CD4-positive, alpha-beta memory T cell (primary cell): ENCODE measurements at regions of chr18 and their contacts with region 1.

Region 1: DNA sequence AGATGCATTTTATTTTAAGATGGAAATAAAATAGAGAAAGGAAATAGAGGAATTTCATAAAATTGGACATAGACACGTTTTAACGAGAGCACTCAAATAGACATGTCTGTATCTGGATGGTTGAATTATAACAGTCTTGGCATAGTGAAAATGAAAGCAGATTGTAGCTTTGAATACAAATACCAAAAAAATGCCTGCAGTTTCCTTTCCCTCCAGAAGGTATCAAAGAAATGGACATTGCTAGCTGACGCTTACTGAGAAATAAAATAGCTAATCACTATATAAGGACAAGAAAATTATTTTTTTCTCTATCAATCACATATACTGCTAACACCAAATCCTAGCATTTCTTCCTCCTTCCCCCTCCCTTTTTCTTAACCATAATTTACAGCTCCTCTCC is 11.4 kb upstream of the MAPRE2 start:
- DNase-seq: peak in 4 of 5 donors; percentile 47 to 62 (median 56)
- H3K4me3 ChIP-seq: peak overlapping the region; percentile 25 to 60
- H3K4me3 Mint-ChIP-seq: peak overlapping the region; percentile 81 to 94 (median 88)
- H3K27ac ChIP-seq: peak overlapping the region; percentile 80
- H3K27ac Mint-ChIP-seq: peak overlapping the region; percentile 84 to 99 (median 98)
- H3K4me1 ChIP-seq: peaks cover 36% of the 10 kb centered on the region
- H3K4me1 Mint-ChIP-seq: peaks cover 34 to 45% (median 40%) of the 10 kb centered on the region in 4 donors
- H3K27me3 ChIP-seq: no peaks in the 10 kb centered on the region
- H3K27me3 Mint-ChIP-seq: no peaks in the 10 kb centered on the region

Region 2: DNA sequence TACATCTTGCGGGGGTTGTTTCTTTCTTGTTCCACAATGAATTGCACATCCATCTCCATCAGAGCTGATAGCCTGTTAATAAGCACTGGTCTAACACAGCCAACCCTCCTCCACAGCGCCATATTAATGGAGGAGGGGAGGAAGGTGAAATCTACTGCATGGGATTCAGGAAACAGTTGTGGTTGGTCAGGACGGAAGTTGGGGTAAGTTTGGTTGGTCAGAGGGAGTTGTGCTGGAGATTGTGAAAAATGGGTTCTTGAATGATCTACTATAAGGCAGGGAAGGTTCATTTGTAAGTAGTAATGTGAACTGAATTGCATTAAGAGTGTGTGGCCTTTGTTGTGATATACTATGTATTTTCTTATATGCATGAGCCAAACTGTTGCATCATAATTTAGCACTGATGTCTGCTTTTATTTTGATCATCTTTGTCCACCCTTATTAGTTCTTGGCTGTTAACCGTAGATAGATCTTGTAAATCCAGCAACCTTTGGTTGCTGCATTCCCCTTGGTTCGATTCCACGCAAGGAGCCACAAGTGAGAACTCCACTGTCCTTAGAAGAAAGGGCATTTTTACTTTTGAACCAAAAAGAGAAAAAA is 139.2 kb before region 1 on chr18:
- CTCF ChIA-PET with region 1: no interaction called
- POLR2A ChIA-PET with region 1: no interaction called
- intact Hi-C with region 1: no loop called
- DNase-seq: no peak
- H3K4me3 ChIP-seq: no peak overlapping the region
- H3K4me3 Mint-ChIP-seq: no peak overlapping the region
- H3K27ac ChIP-seq: no peak overlapping the region
- H3K27ac Mint-ChIP-seq: no peak overlapping the region
- H3K4me1 ChIP-seq: no peaks in the 10 kb centered on the region
- H3K4me1 Mint-ChIP-seq: no peaks in the 10 kb centered on the region
- H3K27me3 ChIP-seq: no peaks in the 10 kb centered on the region
- H3K27me3 Mint-ChIP-seq: peaks cover 13 to 33% of the 10 kb centered on the region in 2 donors

Region 3: GRCh38 chr18:34976899-34977837 is 52.6 kb before region 1 on chr18:
- CTCF ChIA-PET with region 1: interaction called, 3 read pairs
- POLR2A ChIA-PET with region 1: interaction called, 10 read pairs
- intact Hi-C with region 1: no loop called
- DNase-seq: peak; percentile 58 to 81 (median 66)
- H3K4me3 ChIP-seq: peak overlapping the region; percentile 60 to 82
- H3K4me3 Mint-ChIP-seq: peak overlapping the region; percentile 90 to 97 (median 94)
- H3K27ac ChIP-seq: no peak overlapping the region
- H3K27ac Mint-ChIP-seq: peak overlapping the region in 4 of 7 donors; percentile 83 to 90 (median 88)
- H3K4me1 ChIP-seq: peaks cover 14% of the 10 kb centered on the region
- H3K4me1 Mint-ChIP-seq: peaks cover 15 to 30% (median 19%) of the 10 kb centered on the region in 4 donors
- H3K27me3 ChIP-seq: peaks cover 9% of the 10 kb centered on the region
- H3K27me3 Mint-ChIP-seq: peaks cover 10 to 12% of the 10 kb centered on the region in 2 donors

Region 4: DNA sequence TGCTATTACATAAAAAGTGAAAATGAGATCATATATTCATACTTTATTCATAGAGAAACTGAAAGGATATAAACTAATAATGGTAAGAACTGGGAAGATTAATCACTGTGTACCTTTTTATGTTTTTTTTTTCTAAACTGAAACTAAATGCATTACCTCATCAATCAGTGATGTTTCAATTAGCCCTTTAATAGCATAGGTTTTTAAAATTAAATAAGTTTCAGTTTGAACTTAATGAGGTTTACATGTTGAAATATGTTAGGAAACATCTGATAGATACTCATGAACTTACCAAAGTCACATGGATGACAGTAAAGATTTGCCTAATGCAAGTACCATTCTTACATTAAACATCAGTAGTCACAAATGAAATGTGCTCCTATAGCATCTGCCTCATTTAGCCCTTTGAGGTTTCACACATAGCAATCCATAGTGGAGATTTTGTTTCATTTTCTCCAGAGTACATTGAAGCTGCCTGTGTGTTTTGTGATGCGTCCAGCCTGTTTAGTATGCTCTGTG is 20.3 kb after region 1 on chr18:
- CTCF ChIA-PET with region 1: interaction called, 48 read pairs
- POLR2A ChIA-PET with region 1: interaction called, 15 read pairs
- intact Hi-C with region 1: no loop called
- DNase-seq: no peak
- H3K4me3 ChIP-seq: peak overlapping the region in 1 of 2 donors; percentile 31
- H3K4me3 Mint-ChIP-seq: peak overlapping the region in 6 of 8 donors; percentile 32 to 80 (median 68)
- H3K27ac ChIP-seq: no peak overlapping the region
- H3K27ac Mint-ChIP-seq: peak overlapping the region in 5 of 7 donors; percentile 23 to 90 (median 74)
- H3K4me1 ChIP-seq: peaks cover 60% of the 10 kb centered on the region
- H3K4me1 Mint-ChIP-seq: peaks cover 57 to 85% (median 68%) of the 10 kb centered on the region in 4 donors
- H3K27me3 ChIP-seq: no peaks in the 10 kb centered on the region
- H3K27me3 Mint-ChIP-seq: no peaks in the 10 kb centered on the region

Region 5: DNA sequence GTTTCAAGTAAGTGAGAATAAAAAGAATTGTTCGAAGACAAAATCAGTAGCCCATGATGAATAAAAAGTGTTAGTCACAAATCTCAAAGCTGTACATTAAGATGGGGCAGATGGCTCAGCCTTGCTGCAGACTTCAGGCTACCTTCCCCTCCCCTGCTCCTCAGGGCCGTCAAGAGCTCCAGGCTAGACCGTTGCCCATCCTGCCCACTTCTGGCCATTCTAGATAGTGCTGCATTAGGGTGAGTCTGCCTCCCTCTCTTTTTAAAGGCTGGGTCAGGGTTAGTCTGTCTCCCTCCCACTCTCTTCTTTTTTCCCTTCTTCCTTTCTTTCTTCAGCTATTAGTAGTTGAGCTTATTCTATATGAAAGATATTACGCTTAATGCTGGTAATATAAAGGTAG is 97.4 kb after region 1 on chr18:
- CTCF ChIA-PET with region 1: interaction called, 10 read pairs
- POLR2A ChIA-PET with region 1: interaction called, 5 read pairs
- intact Hi-C with region 1: loop called (anchors 5 kb)
- DNase-seq: no peak
- H3K4me3 ChIP-seq: no peak overlapping the region
- H3K4me3 Mint-ChIP-seq: no peak overlapping the region
- H3K27ac ChIP-seq: no peak overlapping the region
- H3K27ac Mint-ChIP-seq: peak overlapping the region in 1 of 7 donors; percentile 63
- H3K4me1 ChIP-seq: no peaks in the 10 kb centered on the region
- H3K4me1 Mint-ChIP-seq: peaks cover 3 to 22% (median 10%) of the 10 kb centered on the region in 4 donors
- H3K27me3 ChIP-seq: no peaks in the 10 kb centered on the region
- H3K27me3 Mint-ChIP-seq: no peaks in the 10 kb centered on the region

Region 6: DNA sequence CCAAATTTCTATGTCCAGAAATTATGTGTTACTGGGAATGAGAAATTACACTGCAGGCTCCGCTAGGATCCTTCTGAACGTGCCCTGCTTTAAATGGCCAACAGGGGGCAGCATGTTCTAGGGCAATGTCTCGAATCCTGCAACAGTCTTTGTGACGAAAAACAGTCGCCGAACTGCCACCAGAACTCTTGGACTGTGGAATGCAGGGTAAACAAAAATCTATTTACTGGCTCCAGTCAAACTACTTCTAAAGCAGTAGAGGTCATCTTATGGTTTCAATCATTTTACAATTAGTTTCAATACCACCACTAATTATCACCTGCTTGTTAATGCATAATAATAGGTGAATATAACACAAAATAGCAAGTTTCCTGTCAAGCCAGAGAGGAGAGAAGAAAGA is 201.3 kb after region 1 on chr18:
- CTCF ChIA-PET with region 1: interaction called, 59 read pairs
- POLR2A ChIA-PET with region 1: no interaction called
- intact Hi-C with region 1: loop called (anchors 2 kb)
- DNase-seq: peak; percentile 72 to 79 (median 78)
- H3K4me3 ChIP-seq: no peak overlapping the region
- H3K4me3 Mint-ChIP-seq: peak overlapping the region in 7 of 8 donors; percentile 21 to 76 (median 51)
- H3K27ac ChIP-seq: no peak overlapping the region
- H3K27ac Mint-ChIP-seq: peak overlapping the region in 1 of 7 donors; percentile 50
- H3K4me1 ChIP-seq: no peaks in the 10 kb centered on the region
- H3K4me1 Mint-ChIP-seq: peaks cover 3 to 4% (median 3%) of the 10 kb centered on the region in 4 donors
- H3K27me3 ChIP-seq: no peaks in the 10 kb centered on the region
- H3K27me3 Mint-ChIP-seq: no peaks in the 10 kb centered on the region

Region 7: GRCh38 chr18:35355140-35355618 is 325.4 kb after region 1 on chr18:
- CTCF ChIA-PET with region 1: interaction called, 22 read pairs
- POLR2A ChIA-PET with region 1: no interaction called
- intact Hi-C with region 1: loop called (anchors 1 kb)
- DNase-seq: peak; percentile 54 to 63 (median 60)
- H3K4me3 ChIP-seq: no peak overlapping the region
- H3K4me3 Mint-ChIP-seq: no peak overlapping the region
- H3K27ac ChIP-seq: no peak overlapping the region
- H3K27ac Mint-ChIP-seq: peak overlapping the region in 1 of 7 donors; percentile 19
- H3K4me1 ChIP-seq: no peaks in the 10 kb centered on the region
- H3K4me1 Mint-ChIP-seq: peaks cover 0 to 2% (median 0%) of the 10 kb centered on the region in 4 donors
- H3K27me3 ChIP-seq: no peaks in the 10 kb centered on the region
- H3K27me3 Mint-ChIP-seq: peaks cover 0 to 2% of the 10 kb centered on the region in 2 donors

Region 8: GRCh38 chr18:35635170-35635569 is 605.4 kb after region 1 on chr18:
- CTCF ChIA-PET with region 1: no interaction called
- POLR2A ChIA-PET with region 1: no interaction called
- intact Hi-C with region 1: no loop called
- DNase-seq: no peak
- H3K4me3 ChIP-seq: no peak overlapping the region
- H3K4me3 Mint-ChIP-seq: no peak overlapping the region
- H3K27ac ChIP-seq: no peak overlapping the region
- H3K27ac Mint-ChIP-seq: no peak overlapping the region
- H3K4me1 ChIP-seq: no peaks in the 10 kb centered on the region
- H3K4me1 Mint-ChIP-seq: peaks cover 0 to 11% (median 3%) of the 10 kb centered on the region in 4 donors
- H3K27me3 ChIP-seq: no peaks in the 10 kb centered on the region
- H3K27me3 Mint-ChIP-seq: no peaks in the 10 kb centered on the region